PC-3 (cell line): ENCODE measurements at regions of chr13 and their contacts with region 1.

Region 1: GRCh38 chr13:51380269-51380668 is 40.8 kb downstream of the SERPINE3 start:
- DNase-seq: peak; percentile 34
- ATAC-seq: peak; percentile 98
- H3K4me3 ChIP-seq: no peak overlapping the region
- H3K27ac ChIP-seq: no peak overlapping the region
- H3K4me1 ChIP-seq: peaks cover 15% of the 10 kb centered on the region
- H3K27me3 ChIP-seq: no peaks in the 10 kb centered on the region
- CTCF ChIP-seq: no peak

Region 2: GRCh38 chr13:51291341-51291740 is 88.9 kb before region 1 on chr13:
- CTCF ChIA-PET with region 1: no interaction called
- POLR2A ChIA-PET with region 1: no interaction called
- intact Hi-C with region 1: no loop called
- DNase-seq: peak; percentile 84
- ATAC-seq: peak; percentile 88
- H3K4me3 ChIP-seq: no peak overlapping the region
- H3K27ac ChIP-seq: peak overlapping the region; percentile 87
- H3K4me1 ChIP-seq: peaks cover 23% of the 10 kb centered on the region
- H3K27me3 ChIP-seq: no peaks in the 10 kb centered on the region
- CTCF ChIP-seq: no peak

Region 3: DNA sequence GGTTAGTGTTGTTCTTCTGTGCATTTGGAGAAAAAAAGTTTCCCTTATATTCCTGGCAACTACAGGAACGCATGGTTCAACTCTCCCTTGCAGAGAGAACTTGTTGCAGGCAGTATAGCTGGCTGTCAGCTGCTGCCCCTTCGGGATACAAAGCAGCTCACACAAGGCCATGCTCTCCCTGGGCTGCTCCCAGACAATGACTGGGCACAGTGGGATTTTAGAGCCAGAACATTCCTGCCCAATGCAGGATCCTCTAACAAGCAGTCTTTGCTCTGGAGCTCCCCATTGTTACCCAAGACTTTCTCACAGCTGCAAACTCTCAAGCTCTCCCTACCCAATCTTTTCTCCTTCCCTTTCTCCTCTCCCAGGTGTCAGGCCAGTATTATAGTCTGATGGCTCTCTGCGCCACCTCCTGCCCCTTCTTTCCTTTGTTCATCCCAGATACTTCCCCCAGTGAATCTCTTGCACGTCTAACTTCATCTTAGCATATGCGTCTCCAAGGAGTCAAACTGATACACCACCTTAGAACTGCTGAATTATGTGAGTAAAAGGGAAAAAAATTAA is 68.2 kb before region 1 on chr13:
- CTCF ChIA-PET with region 1: no interaction called
- POLR2A ChIA-PET with region 1: interaction called, 16 read pairs
- intact Hi-C with region 1: no loop called
- DNase-seq: no peak
- ATAC-seq: no peak
- H3K4me3 ChIP-seq: no peak overlapping the region
- H3K27ac ChIP-seq: no peak overlapping the region
- H3K4me1 ChIP-seq: peaks cover 6% of the 10 kb centered on the region
- H3K27me3 ChIP-seq: no peaks in the 10 kb centered on the region
- CTCF ChIP-seq: no peak